ENCODE measurements at regions of chr2 and their contacts with region 1.

Region 1: DNA sequence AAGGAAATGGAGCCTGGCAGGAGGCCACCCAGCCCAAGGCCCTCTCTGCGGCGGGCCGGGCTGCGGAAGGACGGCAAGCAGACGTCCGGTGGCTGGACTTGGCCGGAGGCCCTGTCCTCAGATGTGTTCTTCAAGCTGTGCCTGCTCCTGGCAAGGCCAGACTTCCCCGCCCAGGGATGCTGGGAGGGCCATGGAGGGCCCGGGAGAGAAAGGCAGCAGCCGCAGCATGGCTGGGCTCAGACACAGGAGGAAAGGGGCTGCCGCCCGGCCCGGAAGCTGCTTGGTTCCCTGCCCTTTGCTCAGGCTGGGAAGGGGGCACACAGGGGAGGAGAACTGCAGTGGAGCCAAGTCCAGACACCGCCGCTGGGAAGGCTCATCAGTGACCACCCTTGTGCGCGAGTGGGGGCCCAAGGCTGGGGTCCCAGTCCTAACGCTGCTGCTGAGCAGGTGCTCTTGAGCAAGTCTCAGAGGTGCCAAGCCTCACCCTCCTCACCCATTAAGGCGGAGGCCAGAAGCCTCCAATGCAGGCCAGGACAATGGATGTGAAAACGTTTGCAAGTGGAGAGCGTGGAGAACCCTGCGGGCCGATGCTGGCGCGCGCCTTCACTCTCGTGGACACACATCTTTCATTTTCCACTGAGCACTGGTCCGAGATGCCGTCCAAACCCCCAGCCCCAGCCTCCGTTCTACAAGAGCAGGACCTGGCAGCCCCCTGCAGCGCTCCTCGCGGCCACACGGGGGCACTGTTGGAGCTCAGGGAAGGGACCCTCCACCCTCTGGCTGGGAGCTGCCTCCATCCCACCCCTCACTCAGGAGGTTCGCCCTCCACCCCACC is 7.9 kb downstream of the CROCC2 start:
- DNase-seq: peak; percentile 16 to 81
- H3K4me3 ChIP-seq: peak overlapping the region in 1 of 2 donors; percentile 20
- H3K27ac ChIP-seq: peak overlapping the region in 1 of 2 donors; percentile 18
- H3K4me1 ChIP-seq: peaks cover 13 to 17% of the 10 kb centered on the region in 2 donors
- H3K27me3 ChIP-seq: no peaks in the 10 kb centered on the region
- CTCF ChIP-seq: peak; percentile 70 to 92 (median 92)

Region 2: GRCh38 chr2:240663546-240664190 is 250.4 kb before region 1 on chr2:
- intact Hi-C with region 1: no loop called
- DNase-seq: no peak
- H3K4me3 ChIP-seq: no peak overlapping the region
- H3K27ac ChIP-seq: no peak overlapping the region
- H3K4me1 ChIP-seq: no peaks in the 10 kb centered on the region
- H3K27me3 ChIP-seq: no peaks in the 10 kb centered on the region
- CTCF ChIP-seq: no peak

Region 3: GRCh38 chr2:240840435-240841080 is 73.5 kb before region 1 on chr2:
- intact Hi-C with region 1: no loop called
- DNase-seq: no peak
- H3K4me3 ChIP-seq: no peak overlapping the region
- H3K27ac ChIP-seq: no peak overlapping the region
- H3K4me1 ChIP-seq: peaks cover 0 to 3% of the 10 kb centered on the region in 2 donors
- H3K27me3 ChIP-seq: no peaks in the 10 kb centered on the region
- CTCF ChIP-seq: peak in 2 of 3 experiments; percentile 16 to 44

Region 4: DNA sequence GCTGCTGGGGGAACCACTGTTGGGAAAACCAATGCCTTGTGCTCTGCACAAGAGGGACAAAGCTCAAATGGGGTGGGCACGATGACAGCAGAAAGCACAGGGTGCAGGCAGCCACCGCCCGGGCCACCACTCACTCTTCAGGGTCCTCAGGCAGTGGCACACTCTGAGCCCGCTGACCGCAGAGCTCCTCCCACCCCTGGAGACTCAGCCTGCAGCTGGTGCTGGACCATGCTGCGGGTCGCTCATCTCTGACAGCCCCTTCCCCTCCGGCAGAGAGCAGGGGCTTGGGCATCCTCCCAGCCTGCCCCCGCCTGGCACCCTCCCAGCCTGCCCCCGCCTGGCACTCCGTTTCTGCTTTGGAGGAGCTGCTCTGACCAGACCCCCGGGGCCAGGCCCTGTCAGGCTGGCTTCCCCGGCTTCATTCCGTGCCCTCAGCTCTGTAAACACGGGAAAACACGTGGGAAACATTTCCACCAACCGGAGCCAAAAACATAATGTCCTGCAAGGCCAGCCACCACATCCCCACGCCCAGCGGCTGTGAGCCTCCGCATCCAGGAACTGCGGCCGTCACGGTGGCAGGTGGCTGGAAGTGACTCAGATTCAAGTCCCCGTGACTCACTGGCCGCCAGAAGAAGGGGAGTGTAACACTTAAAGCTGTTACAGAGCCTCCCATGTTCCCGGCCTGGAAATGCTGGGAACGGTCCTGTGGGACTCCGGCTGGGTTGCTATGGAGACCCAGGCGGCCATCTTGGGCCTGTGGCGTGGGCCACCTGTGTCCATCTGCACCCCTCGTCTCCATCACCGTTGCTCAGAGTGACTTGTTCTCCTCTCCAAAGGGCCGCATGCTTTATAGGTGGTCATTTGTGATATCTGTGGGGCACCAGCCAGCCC is 77.6 kb after region 1 on chr2:
- intact Hi-C with region 1: loop called (anchors 5 kb)
- DNase-seq: peak; percentile 95 to 99
- H3K4me3 ChIP-seq: peak overlapping the region in 1 of 2 donors; percentile 26
- H3K27ac ChIP-seq: peak overlapping the region; percentile 92 to 93
- H3K4me1 ChIP-seq: peaks cover 54 to 84% of the 10 kb centered on the region in 2 donors
- H3K27me3 ChIP-seq: no peaks in the 10 kb centered on the region
- CTCF ChIP-seq: no peak

Region 5: DNA sequence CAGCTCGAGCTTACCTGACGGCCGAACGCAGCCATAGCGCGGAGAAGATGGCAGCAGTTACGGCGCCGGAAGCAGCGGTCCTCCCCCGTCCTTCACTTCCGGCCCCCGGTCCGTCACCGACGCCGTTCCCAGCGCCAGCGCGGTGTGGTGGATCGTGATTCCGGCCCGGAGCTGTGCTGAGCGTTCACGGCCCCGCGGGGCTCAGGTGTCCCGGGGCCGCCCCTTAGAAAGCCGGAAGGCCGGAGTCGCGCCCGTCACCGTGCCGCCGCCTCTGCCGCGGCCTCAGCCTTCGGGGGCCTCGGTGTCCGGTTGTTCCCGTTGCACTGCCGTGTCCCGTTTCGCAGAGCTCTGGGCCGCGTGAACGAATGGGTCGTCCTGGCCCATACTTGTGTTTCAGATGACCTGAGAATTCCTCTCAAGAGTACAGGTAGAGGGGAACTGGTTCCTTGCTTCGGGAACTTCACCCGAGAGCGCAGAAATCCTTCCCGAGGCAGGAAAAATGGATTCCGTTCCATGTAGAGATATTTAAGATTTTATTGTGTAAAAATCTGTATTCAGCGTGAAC is 188.3 kb after region 1 on chr2 and contains the start of gene MTERF4:
- intact Hi-C with region 1: loop called (anchors 5 kb)
- DNase-seq: peak; percentile 52 to 91
- H3K4me3 ChIP-seq: peak within 1 kb of the TSS; percentile 80 to 85
- H3K27ac ChIP-seq: peak within 1 kb of the TSS; percentile 84 to 85
- H3K4me1 ChIP-seq: peaks cover 6 to 10% of the 10 kb centered on the region in 2 donors
- H3K27me3 ChIP-seq: no peaks in the 10 kb centered on the region
- CTCF ChIP-seq: no peak
- total RNA-seq, gene MTERF4: 50.2 TPM

Region 6: DNA sequence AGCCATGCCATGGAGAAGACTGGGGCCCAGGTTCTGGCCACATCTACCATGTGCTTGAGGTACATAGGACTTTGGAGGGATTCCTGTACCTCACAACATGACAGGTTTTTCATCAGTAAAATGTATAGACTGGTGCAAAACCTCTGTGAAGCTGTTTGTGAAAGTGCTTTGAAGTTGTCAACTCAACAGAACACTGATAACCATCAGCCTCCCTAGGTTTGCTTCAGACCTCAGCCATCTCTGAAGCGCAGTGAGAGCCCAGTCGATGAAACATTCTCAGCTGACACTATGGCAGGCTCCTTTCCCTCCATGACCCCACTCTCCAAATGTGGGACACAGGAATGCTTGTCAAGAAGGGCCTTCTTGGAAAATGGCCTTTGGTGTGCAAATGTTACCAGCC is 555.7 kb after region 1 on chr2:
- intact Hi-C with region 1: no loop called
- DNase-seq: no peak
- H3K4me3 ChIP-seq: no peak overlapping the region
- H3K27ac ChIP-seq: no peak overlapping the region
- H3K4me1 ChIP-seq: no peaks in the 10 kb centered on the region
- H3K27me3 ChIP-seq: no peaks in the 10 kb centered on the region
- CTCF ChIP-seq: no peak